ENCODE measurements at regions of chr21 and their contacts with region 1.

Region 1: DNA sequence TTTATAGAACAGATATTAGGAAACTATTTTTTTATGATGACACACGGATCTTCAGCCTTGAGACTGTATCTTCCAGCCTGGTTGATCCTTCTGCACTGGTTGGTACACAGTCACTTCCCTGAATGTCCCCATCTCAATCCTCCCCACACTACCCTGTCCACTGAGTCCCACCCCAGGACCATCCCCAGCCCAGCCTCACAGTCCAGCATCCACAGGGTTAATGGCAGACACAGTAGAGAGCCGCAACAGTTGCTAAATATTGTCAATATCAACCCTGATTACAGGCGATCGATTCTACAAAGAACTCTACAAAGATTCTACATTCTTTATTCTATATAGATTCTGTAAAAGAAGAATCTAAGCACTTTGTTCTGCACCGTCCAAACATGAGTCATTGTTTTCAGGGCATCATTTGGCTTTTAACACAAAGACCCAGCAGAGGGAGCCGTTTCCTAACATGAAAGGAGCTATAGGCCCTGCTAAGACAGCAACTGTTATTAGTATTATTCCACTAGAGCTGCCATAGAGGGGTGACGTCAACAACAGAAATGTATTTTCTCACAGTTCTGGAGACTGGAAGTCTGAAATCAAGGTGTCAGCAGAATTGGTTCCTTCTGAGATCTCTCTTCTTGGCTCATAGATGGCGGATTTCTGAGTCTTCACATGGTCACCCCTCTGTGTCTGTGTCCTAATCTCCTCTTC is 30.1 kb upstream of the IFNAR2 start:
- DNase-seq: peak in 4 of 6 donors; percentile 60 to 90 (median 81)
- ATAC-seq: peak; percentile 76 to 83 (median 80)
- H3K4me3 ChIP-seq: no peak overlapping the region
- H3K27ac ChIP-seq: peak overlapping the region in 2 of 4 donors; percentile 10 to 54
- H3K4me1 ChIP-seq: peaks cover 12 to 35% (median 13%) of the 10 kb centered on the region in 3 donors
- H3K27me3 ChIP-seq: no peaks in the 10 kb centered on the region
- CTCF ChIP-seq: peak; percentile 50 to 67 (median 58)

Region 2: DNA sequence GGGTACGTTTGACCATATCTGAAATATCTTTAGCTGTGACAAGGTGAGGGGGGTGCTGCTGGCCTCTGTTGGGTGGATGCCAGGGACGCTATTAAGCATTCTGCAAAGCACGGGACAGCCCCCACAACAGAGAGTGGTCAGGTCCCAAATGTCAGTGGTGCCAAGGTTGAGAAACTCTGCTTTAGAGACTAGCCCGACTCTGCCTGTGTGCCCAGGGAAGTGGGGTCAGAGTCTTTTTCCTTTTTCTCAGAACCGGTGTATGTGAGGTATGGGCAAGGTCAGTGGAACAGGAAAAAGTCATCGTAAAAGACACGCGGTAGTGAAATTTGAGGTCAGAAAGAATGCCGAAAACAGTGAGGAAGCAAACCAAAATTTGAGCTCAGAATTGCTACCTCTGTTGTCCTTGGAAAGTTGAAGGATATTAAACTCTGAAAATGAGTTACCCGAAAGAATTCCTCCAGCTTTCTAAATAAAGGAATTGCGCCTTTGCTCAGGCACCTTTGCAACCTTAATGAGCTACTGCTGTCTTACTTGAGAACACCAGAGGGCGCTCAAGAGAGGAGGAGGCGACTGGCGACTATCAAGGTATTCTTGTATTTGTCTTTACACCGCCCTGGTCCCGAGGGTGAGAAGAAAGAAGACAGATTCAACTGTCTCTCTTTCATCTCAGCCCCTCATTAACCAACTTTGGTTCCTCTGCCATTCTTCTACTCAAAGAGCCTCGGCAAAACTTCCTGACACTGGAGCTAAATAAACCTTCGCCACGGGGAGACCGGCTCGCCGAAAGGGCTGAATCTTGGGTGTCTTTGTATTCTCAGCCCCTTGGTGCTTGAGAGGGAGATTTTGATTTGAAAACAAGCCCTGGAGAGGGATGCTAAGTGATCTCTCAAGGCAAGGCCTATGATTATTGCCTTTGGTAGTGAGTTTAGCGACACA is 259.3 kb before region 1 on chr21:
- intact Hi-C with region 1: loop called in 1 of 3 experiments (anchors 10 kb)
- DNase-seq: peak in 3 of 6 donors; percentile 8 to 31 (median 24)
- ATAC-seq: peak; percentile 64 to 90 (median 83)
- H3K4me3 ChIP-seq: no peak overlapping the region
- H3K27ac ChIP-seq: no peak overlapping the region
- H3K4me1 ChIP-seq: no peaks in the 10 kb centered on the region
- H3K27me3 ChIP-seq: no peaks in the 10 kb centered on the region
- CTCF ChIP-seq: peak; percentile 63 to 81 (median 76)

Region 3: GRCh38 chr21:33299181-33299752 is 99.6 kb after region 1 on chr21:
- intact Hi-C with region 1: no loop called
- DNase-seq: no peak
- ATAC-seq: peak in 2 of 4 donors; percentile 13 to 37
- H3K4me3 ChIP-seq: no peak overlapping the region
- H3K27ac ChIP-seq: peak overlapping the region in 1 of 4 donors; percentile 6
- H3K4me1 ChIP-seq: peaks cover 0 to 14% (median 9%) of the 10 kb centered on the region in 3 donors
- H3K27me3 ChIP-seq: no peaks in the 10 kb centered on the region
- CTCF ChIP-seq: no peak

Region 4: DNA sequence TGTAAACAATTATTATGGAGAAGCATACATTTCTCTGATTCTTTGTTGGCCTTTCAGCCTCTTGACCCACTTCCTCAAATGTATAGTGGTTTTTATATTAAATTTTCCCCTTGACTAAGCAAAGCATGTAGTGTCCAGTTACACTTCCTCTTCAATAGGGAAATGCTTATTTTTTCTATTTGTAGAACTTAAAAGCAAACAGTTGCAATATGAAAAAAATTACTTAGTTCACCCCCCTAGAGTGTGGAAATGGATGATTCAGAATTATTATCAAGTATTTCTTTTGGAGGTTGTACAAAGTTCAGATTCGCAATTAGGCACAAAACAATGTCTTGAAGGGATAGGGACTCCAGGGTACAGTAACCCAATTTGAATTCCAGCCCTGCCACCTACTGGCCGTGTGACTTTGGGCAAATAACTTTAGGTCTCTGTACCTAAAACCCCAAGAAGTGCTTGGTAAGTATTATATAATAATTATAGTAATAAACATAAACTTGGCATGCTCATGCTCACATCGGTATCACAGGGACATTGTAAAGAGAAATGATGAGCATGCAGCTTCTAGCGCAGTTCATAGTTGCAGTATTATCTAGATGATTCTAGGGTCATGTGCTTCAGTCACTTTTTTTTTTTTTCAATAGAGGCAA is 174.9 kb after region 1 on chr21:
- intact Hi-C with region 1: loop called in 1 of 3 experiments (anchors 5 kb)
- DNase-seq: peak in 2 of 6 donors; percentile 46 to 49
- ATAC-seq: peak in 3 of 4 donors; percentile 84 to 92 (median 88)
- H3K4me3 ChIP-seq: no peak overlapping the region
- H3K27ac ChIP-seq: peak overlapping the region in 2 of 4 donors; percentile 12 to 42
- H3K4me1 ChIP-seq: peaks cover 0 to 7% (median 0%) of the 10 kb centered on the region in 3 donors
- H3K27me3 ChIP-seq: peaks cover 0 to 3% (median 1%) of the 10 kb centered on the region in 4 donors
- CTCF ChIP-seq: peak; percentile 13 to 37 (median 27)

Region 5: DNA sequence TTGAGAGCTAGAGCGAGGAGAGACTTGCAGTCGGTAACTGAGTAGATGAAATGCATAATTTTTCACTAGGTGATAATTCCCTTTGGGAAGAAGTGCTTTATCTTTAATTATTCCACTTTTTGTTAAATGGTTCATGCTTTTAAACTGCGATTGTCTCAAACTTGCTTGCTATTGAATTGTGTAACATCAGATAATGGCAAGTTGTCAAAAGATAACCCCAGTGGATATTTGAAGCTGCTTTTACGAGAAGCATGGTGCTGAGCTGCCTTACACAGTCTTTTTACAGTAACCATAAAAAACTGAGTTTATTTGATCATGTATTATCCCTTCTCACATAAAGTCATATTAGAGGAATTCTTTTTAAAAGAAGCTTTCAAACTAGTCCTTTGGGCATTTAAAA is 249.9 kb after region 1 on chr21:
- intact Hi-C with region 1: loop called in 1 of 3 experiments (anchors 5 kb)
- DNase-seq: no peak
- ATAC-seq: no peak
- H3K4me3 ChIP-seq: no peak overlapping the region
- H3K27ac ChIP-seq: no peak overlapping the region
- H3K4me1 ChIP-seq: no peaks in the 10 kb centered on the region
- H3K27me3 ChIP-seq: no peaks in the 10 kb centered on the region
- CTCF ChIP-seq: no peak